ENCODE measurements at regions of chr1 and their contacts with region 1.

Region 1: GRCh38 chr1:221801773-221802516 is 60.1 kb upstream of the DUSP10 start:
- DNase-seq: no peak
- ATAC-seq: peak; percentile 53
- H3K4me3 ChIP-seq: no peak overlapping the region
- H3K27ac ChIP-seq: no peak overlapping the region
- H3K4me1 ChIP-seq: peaks cover 6% of the 10 kb centered on the region; the same call in 1 of the 2 replicates
- H3K27me3 ChIP-seq: no peaks in the 10 kb centered on the region
- CTCF ChIP-seq: no peak
- EP300 ChIP-seq: no peak
- POLR2A ChIP-seq: no peak
- RAD21 ChIP-seq: no peak

Region 2: DNA sequence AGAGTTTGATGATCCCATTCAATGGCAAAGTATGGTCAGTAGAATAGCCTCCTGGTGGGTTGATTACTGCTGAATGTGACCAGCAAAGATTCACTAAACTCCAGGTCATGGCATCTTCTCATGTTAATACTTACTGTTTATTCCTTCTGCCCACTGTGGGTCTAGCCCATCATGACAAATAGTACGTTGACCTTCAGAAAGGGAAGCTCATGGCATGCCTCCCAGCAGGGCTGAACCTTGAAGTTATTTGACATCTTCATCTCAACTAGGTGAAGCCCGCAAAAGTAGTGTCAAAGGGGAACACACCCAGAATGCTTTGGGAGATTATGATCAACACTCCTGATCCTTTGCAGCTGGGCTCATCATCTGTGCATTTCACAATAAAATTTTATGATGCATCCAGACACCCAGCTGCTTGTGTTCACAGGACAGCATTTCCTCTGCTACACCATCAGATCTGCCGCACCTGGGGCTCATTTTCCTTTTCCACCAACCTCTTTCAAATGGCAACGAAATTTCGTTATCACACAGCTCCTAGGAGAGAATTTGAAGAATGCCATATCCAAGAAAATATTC is 873.1 kb before region 1 on chr1:
- CTCF ChIA-PET with region 1: no interaction called
- POLR2A ChIA-PET with region 1: no interaction called
- RAD21 ChIA-PET with region 1: no interaction called
- SMC1A ChIA-PET with region 1: no interaction called
- in situ Hi-C with region 1: no loop called
- intact Hi-C with region 1: no loop called
- DNase-seq: no peak
- ATAC-seq: no peak
- H3K4me3 ChIP-seq: no peak overlapping the region
- H3K27ac ChIP-seq: no peak overlapping the region
- H3K4me1 ChIP-seq: no peaks in the 10 kb centered on the region
- H3K27me3 ChIP-seq: no peaks in the 10 kb centered on the region
- CTCF ChIP-seq: no peak
- EP300 ChIP-seq: no peak
- POLR2A ChIP-seq: no peak
- RAD21 ChIP-seq: no peak

Region 3: DNA sequence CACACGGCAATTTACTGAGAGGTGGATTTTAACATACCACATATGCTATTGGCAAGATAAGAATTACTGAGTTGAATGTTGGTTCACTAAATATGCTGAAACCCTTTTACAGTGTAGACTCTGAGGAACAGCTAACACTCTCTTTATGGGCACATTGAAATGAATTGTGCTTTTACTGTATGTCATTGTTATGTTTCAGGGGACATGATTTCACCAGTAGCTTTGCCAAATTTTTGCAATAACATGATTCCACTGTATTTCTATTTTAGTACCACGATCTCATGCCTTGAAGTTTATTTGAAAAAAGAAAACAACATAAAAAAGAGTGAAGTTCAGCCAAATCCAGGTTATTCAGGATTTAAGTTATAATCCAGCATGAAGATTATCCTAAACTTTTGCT is 734.2 kb before region 1 on chr1:
- CTCF ChIA-PET with region 1: no interaction called
- POLR2A ChIA-PET with region 1: no interaction called
- RAD21 ChIA-PET with region 1: no interaction called
- SMC1A ChIA-PET with region 1: no interaction called
- in situ Hi-C with region 1: no loop called
- intact Hi-C with region 1: no loop called
- DNase-seq: no peak
- ATAC-seq: no peak
- H3K4me3 ChIP-seq: no peak overlapping the region
- H3K27ac ChIP-seq: no peak overlapping the region
- H3K4me1 ChIP-seq: peaks cover 30% of the 10 kb centered on the region
- H3K27me3 ChIP-seq: no peaks in the 10 kb centered on the region
- CTCF ChIP-seq: no peak
- EP300 ChIP-seq: no peak
- POLR2A ChIP-seq: no peak
- RAD21 ChIP-seq: no peak

Region 4: DNA sequence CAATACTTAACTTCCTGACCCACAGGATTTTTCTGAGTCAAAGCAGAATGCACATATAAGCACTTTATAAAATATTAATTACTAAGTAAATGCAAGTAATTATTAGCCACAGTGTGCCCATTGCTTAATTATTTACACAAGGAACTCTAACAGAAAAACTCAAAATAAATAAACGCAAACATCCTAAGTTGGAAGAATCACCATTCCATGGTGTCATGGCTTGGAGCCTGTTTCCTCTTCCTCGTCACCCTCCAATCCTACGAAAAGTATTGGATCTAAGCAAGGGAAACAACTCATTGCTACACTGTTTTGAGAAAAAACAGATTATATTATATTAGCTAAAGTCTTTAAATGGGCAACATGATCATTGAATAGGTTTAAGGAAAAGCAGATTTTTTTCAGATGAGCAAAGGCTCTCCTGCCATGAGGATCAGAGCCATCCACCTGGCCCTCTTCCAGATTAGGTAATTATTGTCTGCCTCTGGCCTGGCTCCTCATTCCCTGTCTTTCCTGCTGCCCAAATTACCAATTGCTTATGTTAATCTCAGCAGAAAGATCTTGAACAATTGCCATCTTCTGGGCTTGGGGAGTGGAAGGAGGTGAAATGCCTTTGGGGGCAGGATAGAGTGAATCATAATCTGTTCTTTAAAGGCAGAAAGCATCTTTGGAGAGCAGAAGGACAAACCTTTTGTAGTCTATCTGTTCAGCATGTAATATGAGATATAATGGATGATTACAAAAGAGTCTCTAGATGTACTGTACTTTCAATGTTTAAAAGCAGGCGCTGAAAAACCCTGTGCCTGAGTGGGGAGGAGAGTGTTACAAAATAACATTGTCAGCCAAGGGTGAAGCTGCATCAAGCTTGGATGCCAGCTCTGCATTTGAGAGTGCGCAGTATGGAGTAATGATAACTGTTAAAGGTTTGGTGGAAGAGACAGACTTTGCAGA is 181.2 kb before region 1 on chr1:
- CTCF ChIA-PET with region 1: no interaction called
- POLR2A ChIA-PET with region 1: no interaction called
- RAD21 ChIA-PET with region 1: no interaction called
- SMC1A ChIA-PET with region 1: no interaction called
- in situ Hi-C with region 1: no loop called
- intact Hi-C with region 1: no loop called
- DNase-seq: no peak
- ATAC-seq: no peak
- H3K4me3 ChIP-seq: no peak overlapping the region
- H3K27ac ChIP-seq: no peak overlapping the region
- H3K4me1 ChIP-seq: no peaks in the 10 kb centered on the region
- H3K27me3 ChIP-seq: no peaks in the 10 kb centered on the region
- CTCF ChIP-seq: no peak
- EP300 ChIP-seq: no peak
- POLR2A ChIP-seq: no peak
- RAD21 ChIP-seq: no peak

Region 5: DNA sequence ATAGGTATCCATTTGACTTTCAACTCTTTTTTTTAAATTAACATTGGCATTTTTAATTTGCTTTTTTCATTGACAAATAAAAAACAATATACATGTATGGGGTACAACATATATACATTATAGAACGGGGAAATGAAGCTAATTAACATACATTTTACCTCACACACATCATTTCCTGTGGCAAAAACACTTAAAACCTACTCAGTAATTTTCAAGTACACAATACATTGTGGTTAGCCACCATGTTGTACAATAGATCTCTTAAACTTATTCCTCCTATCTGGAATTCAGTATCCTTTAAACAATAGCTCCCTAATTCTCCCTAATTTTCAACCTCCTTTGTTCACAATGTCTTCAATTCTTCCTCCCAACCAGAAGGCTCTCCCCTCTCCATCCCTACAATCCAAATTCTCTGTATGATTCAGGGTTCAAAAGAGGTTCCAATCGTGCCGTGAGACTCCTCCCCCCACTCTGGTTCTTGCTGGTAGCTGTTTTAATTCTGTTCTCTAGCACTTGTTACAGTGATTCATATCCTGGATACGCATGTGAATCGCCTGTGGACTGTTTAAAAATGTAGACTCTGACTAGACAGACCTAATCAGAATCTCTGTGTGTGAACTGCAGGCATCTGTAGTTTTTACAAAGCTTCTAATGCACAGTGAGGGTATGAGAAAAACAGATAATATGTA is 27.5 kb after region 1 on chr1:
- CTCF ChIA-PET with region 1: interaction called, 6 read pairs
- POLR2A ChIA-PET with region 1: no interaction called
- RAD21 ChIA-PET with region 1: no interaction called
- SMC1A ChIA-PET with region 1: interaction called, 14 read pairs
- in situ Hi-C with region 1: no loop called
- intact Hi-C with region 1: no loop called
- DNase-seq: no peak
- ATAC-seq: peak; percentile 82
- H3K4me3 ChIP-seq: no peak overlapping the region
- H3K27ac ChIP-seq: no peak overlapping the region
- H3K4me1 ChIP-seq: peaks cover 8% of the 10 kb centered on the region
- H3K27me3 ChIP-seq: no peaks in the 10 kb centered on the region
- CTCF ChIP-seq: no peak
- EP300 ChIP-seq: no peak
- POLR2A ChIP-seq: no peak
- RAD21 ChIP-seq: no peak

Measured in GM12878 (cell line).